ENCODE measurements at regions of chr11 and their contacts with region 1.

Region 1: DNA sequence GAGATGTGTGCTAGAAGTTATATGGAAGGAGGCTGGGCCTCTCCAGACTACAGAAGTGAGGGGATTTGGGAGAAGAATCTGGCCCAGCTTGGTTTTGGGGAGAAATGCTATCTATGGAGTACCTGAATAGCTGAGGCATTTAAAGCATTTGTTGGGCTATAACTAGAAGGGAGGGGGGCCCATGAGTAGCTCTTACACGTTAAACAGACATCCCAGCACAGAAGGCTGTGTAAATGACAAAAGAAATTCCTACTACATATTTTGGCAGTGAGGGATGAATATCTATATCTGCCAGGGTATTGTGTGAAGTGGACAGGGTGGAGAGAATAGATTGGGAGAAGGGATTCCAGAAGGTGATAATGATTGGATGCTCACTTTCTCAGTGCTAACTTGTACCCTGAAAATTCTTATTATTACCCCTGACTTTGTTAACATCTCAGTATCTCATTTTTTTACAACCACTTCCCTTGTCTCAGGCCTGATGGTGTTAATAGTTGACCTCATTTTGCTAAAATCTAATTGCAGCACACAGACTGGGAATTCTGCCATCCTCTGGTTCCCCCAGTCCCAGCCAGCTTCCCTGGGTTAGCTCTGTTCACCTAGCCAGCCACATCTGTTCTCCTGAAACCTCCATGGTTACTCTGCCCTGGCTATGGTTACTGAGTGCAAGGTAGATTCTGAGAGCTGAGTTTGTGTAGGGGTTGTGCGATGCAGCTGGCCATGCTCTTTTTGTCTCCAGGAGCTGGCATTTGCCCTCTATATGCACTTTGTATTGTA is 28.8 kb upstream of the RRM1 start:
- DNase-seq: no peak
- ATAC-seq: peak; percentile 44
- H3K4me3 ChIP-seq: no peak overlapping the region
- H3K27ac ChIP-seq: peak overlapping the region; percentile 28 to 71
- H3K4me1 ChIP-seq: peaks cover 4 to 7% of the 10 kb centered on the region in 2 donors
- H3K27me3 ChIP-seq: no peaks in the 10 kb centered on the region

Region 2: DNA sequence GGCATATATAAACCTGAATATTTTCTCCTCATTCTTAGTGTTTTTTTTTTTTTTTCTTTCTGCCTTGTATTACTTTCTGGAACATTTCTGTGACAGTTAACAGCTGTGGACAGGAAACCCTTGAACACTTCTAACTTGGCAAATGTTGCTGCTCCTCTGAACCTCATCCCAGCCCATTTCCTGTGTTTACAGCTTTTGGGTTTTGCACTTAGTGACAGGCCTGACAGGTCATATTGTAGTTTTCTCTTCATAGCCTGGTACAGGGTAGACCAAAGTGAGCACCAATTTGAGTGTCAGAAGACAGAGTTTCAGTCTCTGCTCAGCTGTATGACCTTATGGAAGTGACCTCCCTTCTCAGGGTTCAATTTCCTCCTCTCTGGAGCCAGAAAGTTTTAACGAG is 118.7 kb before region 1 on chr11:
- intact Hi-C with region 1: loop called in 1 of 2 experiments (anchors 10 kb)
- DNase-seq: no peak
- ATAC-seq: peak; percentile 66
- H3K4me3 ChIP-seq: no peak overlapping the region
- H3K27ac ChIP-seq: peak overlapping the region; percentile 84 to 91
- H3K4me1 ChIP-seq: peaks cover 7 to 32% of the 10 kb centered on the region in 2 donors
- H3K27me3 ChIP-seq: no peaks in the 10 kb centered on the region

Region 3: GRCh38 chr11:3995949-3996554 is 69.7 kb before region 1 on chr11:
- intact Hi-C with region 1: no loop called
- DNase-seq: no peak
- ATAC-seq: peak; percentile 29
- H3K4me3 ChIP-seq: no peak overlapping the region
- H3K27ac ChIP-seq: no peak overlapping the region
- H3K4me1 ChIP-seq: no peaks in the 10 kb centered on the region
- H3K27me3 ChIP-seq: no peaks in the 10 kb centered on the region

Measured in aorta (tissue), 5 donors.